Endothelial cell of umbilical vein (primary cell): ENCODE measurements at regions of chr1 and their contacts with region 1.

Region 1: DNA sequence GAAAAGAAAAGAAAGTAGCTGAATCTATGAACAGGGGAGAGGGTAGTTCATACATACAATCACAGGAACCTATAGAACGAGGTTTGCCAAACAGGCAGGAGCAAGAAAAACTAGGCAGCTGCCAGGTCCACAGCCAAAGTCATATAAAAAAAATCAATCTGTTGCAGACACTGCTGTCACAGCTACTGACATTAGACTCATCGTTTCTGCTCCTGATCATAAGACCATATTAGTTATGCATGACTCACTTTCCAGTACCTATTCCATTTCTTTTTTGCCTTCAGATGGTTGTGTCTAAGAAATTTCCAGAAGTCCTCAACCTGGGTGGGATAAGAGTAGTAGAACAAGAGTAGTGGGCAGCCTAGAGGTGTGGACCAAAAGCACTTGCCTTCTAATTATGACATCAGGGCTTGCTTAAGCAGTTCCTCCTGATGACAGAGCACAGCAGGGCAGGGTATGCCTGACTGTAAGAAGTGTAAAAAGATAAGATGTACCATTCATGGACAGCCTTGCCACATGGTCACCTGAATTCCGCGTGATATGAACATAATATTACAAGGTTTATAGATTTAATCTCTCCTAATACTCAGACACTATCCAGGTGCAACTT is 323.2 kb upstream of the SGIP1 start:
- DNase-seq: no peak
- H3K4me3 ChIP-seq: no peak overlapping the region
- H3K27ac ChIP-seq: no peak overlapping the region
- H3K4me1 ChIP-seq: no peaks in the 10 kb centered on the region
- H3K27me3 ChIP-seq: peaks cover 0 to 2% of the 10 kb centered on the region in 2 experiments
- CTCF ChIP-seq: no peak
- POLR2A ChIP-seq: no peak

Region 2: DNA sequence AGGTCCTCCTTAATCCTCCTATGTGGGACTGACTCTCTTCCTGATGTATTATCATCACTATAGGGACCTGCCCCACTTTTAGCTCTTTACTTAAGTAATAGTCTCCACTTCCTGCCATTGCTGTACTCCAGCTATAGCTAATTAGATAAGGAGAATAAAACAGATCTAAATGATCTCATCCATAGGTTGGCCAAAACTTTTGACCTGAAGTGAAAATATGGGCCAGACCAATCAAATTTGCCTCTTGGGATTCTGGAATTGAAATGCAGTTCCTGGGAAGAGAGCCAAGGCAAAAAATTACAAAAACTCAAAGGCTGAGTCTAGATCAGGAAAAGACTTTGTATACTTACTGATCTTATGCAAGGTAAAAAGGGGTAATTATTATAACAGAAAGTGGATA is 454.1 kb before region 1 on chr1:
- CTCF ChIA-PET with region 1: no interaction called
- POLR2A ChIA-PET with region 1: interaction called, 10 read pairs
- dilution Hi-C with region 1: no loop called
- intact Hi-C with region 1: no loop called
- DNase-seq: no peak
- H3K4me3 ChIP-seq: no peak overlapping the region
- H3K27ac ChIP-seq: no peak overlapping the region
- H3K4me1 ChIP-seq: no peaks in the 10 kb centered on the region
- H3K27me3 ChIP-seq: peaks cover 0 to 2% of the 10 kb centered on the region in 2 experiments
- CTCF ChIP-seq: no peak
- POLR2A ChIP-seq: no peak

Region 3: GRCh38 chr1:66197785-66198184 is 13.0 kb before region 1 on chr1:
- CTCF ChIA-PET with region 1: no interaction called
- POLR2A ChIA-PET with region 1: no interaction called
- dilution Hi-C with region 1: no loop called
- intact Hi-C with region 1: no loop called
- DNase-seq: no peak
- H3K4me3 ChIP-seq: no peak overlapping the region
- H3K27ac ChIP-seq: no peak overlapping the region
- H3K4me1 ChIP-seq: no peaks in the 10 kb centered on the region
- H3K27me3 ChIP-seq: peaks cover 0 to 7% of the 10 kb centered on the region in 2 experiments
- CTCF ChIP-seq: no peak
- POLR2A ChIP-seq: no peak

Region 4: GRCh38 chr1:66294692-66295384 is 84.1 kb after region 1 on chr1:
- CTCF ChIA-PET with region 1: no interaction called
- POLR2A ChIA-PET with region 1: no interaction called
- dilution Hi-C with region 1: no loop called
- intact Hi-C with region 1: no loop called
- DNase-seq: peak; percentile 64
- H3K4me3 ChIP-seq: no peak overlapping the region
- H3K27ac ChIP-seq: peak overlapping the region; percentile 12
- H3K4me1 ChIP-seq: no peaks in the 10 kb centered on the region
- H3K27me3 ChIP-seq: no peaks in the 10 kb centered on the region
- CTCF ChIP-seq: no peak
- POLR2A ChIP-seq: no peak